ENCODE measurements at regions of chr2 and their contacts with region 1.

Region 1: DNA sequence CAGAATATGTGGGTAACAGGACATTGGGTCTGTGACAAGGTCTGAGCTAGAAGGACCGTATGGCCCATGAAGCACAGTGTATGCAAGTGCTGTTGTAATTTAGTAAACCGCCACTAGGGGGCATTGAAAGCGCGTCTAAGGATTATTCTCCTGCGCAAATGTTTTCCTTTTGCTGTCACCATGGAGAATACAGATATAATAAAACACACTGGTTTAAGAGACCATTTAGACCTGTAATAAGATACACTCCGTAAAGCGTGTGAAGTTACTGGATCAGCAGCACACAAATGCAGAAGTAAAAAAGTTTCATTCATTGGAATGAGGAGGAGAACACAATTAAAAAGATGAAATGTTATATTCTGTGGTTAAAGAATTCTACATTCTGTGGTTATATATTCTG is 272.4 kb downstream of the AGAP1 start:
- DNase-seq: no peak

Region 2: DNA sequence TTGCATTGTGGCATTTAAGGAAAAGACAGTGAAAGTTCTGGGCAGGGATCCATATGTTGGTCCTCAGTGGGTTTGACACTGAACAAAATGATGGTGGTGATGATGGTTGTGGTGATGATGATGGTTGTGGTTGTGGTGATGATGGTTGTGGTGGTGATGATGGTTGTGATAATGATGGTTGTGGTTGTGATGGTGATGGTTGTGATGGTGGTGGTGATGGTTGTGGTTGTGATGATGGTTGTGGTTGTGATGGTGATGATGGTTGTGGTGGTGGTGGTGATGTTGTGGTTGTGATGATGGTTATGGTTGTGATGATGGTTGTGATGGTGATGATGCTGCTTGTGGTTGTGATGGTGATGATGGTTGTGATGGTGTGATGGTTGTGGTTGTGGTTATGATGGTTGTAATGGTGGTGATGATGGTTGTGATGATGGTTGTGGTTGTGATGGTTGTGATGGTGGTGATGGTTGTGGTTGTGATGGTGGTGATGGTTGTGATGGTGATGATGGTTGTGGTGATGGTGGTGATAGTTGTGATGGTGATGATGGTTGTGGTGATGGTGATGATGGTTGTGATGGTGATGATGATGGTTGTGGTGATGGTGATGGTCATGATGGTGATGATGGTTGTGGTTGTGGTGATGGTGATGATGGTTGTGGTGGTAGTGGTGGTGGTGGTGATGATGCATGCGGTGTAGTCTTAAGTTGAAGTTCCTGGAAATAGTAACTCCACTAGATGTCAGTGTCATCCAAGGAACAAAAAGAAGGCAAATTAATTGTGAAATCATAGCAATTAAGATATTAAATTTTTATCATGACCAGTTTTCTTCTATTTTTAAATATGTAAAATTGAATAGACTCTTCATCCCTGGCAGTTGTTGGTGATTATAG is 36.5 kb after region 1 on chr2:
- intact Hi-C with region 1: no loop called
- DNase-seq: no peak

Region 3: DNA sequence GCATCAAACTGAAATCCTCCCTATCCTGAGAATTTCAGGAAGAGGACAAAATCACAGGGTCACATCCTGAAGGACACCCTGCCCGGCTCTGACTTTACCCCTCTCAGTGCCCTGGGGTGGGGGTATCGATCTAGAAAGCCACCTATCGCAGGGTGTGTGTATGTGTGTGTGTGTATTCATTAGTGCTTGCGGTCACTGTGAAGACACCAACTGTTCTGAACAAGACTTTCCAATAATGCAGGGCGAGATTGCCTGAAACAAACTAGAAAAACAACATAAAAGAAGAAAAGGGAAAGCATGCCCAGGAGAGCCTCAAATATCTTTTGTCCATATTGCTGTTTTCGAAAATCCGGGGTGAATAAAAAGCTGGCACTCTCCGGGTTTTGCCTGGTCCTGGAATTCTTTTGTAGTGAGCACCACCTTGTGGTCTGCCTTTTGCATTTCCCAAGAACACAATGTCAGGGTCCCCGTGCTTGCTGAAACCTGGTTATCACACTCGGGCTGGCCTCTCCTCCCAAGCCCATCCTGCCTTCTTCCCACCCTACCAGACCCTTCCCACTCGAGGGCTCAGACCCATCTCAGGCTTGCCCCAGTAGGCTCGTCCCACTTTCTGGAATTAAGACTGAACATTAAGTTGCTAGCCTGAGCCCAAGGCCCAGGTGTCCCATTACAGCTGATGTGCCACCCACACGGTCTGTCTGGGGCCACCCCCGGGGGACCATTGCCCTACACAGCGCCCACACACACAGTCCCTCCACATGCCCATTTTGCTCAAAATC is 1294.4 kb after region 1 on chr2:
- intact Hi-C with region 1: loop called (anchors 10 kb)
- DNase-seq: no peak

Measured in cardiac septum (tissue), 1 donor.